ENCODE measurements at regions of chr3 and their contacts with region 1.

Region 1: GRCh38 chr3:64278625-64279024 is 53.4 kb upstream of the PRICKLE2 start:
- DNase-seq: no peak
- H3K4me3 ChIP-seq: no peak overlapping the region
- H3K27ac ChIP-seq: no peak overlapping the region
- H3K4me1 ChIP-seq: no peaks in the 10 kb centered on the region
- H3K27me3 ChIP-seq: no peaks in the 10 kb centered on the region
- CTCF ChIP-seq: no peak
- POLR2A ChIP-seq: no peak

Region 2: GRCh38 chr3:64238971-64239667 is 39.5 kb before region 1 on chr3:
- intact Hi-C with region 1: no loop called
- DNase-seq: peak in 1 of 2 donors; percentile 81
- H3K4me3 ChIP-seq: peak overlapping the region in 1 of 3 donors; percentile 29
- H3K27ac ChIP-seq: peak overlapping the region; percentile 78 to 81
- H3K4me1 ChIP-seq: no peaks in the 10 kb centered on the region
- H3K27me3 ChIP-seq: no peaks in the 10 kb centered on the region
- CTCF ChIP-seq: no peak
- POLR2A ChIP-seq: no peak

Region 3: DNA sequence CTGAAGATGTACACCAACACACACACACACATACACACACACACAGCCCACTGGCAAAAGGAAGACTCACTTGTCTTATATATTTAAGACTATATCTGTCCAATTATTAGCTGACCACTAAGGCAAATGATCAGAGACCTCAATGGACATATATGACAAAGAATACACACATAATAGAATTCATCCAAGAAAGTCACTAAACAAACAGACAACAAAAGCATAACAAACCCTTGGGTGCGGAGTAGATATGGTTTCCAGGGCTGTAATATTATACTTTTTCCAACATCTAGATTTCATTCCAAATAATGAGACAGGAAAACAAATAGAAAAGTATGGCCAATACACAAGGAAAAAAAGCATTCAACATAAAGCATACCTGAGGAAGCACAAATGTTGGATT is 18.9 kb after region 1 on chr3:
- intact Hi-C with region 1: loop called (anchors 2 kb)
- DNase-seq: no peak
- H3K4me3 ChIP-seq: no peak overlapping the region
- H3K27ac ChIP-seq: no peak overlapping the region
- H3K4me1 ChIP-seq: no peaks in the 10 kb centered on the region
- H3K27me3 ChIP-seq: no peaks in the 10 kb centered on the region
- CTCF ChIP-seq: no peak
- POLR2A ChIP-seq: no peak

Measured in breast epithelium (tissue), 4 donors.